ENCODE measurements at regions of chr4 and their contacts with region 1.

Region 1: GRCh38 chr4:77156533-77156911 is 485 bp upstream of the CCNG2 start:
- DNase-seq: peak in 8 of 9 experiments; percentile 91 to 99 (median 97)
- ATAC-seq: peak; percentile 93
- H3K4me3 ChIP-seq: peak overlapping the region; percentile 83 to 93
- H3K4me3 Mint-ChIP-seq: peak overlapping the region; percentile 100
- H3K27ac ChIP-seq: peak overlapping the region; percentile 62 to 79
- H3K27ac Mint-ChIP-seq: peak overlapping the region; percentile 99
- H3K4me1 ChIP-seq: peaks cover 21% of the 10 kb centered on the region
- H3K4me1 Mint-ChIP-seq: peaks cover 39% of the 10 kb centered on the region
- H3K27me3 ChIP-seq: no peaks in the 10 kb centered on the region
- H3K27me3 Mint-ChIP-seq: no peaks in the 10 kb centered on the region
- CTCF ChIP-seq: no peak

Region 2: DNA sequence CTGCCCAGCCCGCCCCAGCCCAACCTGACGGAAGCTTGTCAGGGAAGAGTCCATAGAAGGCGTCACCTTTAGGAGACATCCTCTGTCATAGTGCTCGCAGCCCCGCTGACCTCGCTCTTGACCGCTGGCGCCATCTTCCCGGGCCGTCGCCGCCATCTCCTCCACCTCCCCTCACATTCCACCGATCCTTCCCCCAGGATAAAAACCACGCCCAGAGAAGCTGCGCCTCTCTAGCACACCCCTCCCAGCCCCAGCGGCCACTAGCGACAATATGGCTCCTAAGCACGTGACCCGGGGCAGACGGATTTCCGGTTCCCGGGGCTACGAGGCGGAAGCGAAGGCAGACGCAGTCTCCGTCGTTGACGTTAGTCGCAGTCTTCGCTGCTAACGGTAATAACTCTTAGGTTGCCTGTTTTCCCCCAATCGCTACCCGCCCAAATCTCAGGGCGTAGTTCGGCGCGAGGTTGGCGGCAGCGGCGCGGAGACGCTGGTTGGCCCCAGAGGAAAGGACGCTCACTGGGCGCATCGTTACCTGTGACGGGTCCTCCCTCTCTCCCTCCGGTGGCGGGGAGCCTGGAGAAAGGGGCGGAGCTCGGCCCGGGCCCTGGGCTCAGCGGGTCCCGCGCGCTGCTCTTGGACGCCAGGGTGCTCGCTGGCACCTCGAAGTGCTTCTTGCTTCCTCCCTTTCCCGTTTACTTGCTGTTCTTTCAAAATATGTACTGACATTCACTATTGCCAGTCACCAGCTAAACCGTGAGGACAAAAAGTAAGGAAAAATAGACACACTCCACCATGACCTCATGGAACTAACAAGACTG is 1642.2 kb before region 1 on chr4 and contains the starts of genes RCHY1 and THAP6:
- CTCF ChIA-PET with region 1: no interaction called
- POLR2A ChIA-PET with region 1: no interaction called
- intact Hi-C with region 1: loop called in 1 of 2 experiments (anchors 5 kb)
- DNase-seq: peak; percentile 84 to 97 (median 92)
- ATAC-seq: peak; percentile 87
- H3K4me3 ChIP-seq: peak within 1 kb of the TSS; percentile 92 to 94
- H3K4me3 Mint-ChIP-seq: no peak within 1 kb of the TSS
- H3K27ac ChIP-seq: peak within 1 kb of the TSS; percentile 96 to 98
- H3K27ac Mint-ChIP-seq: peak within 1 kb of the TSS; percentile 99
- H3K4me1 ChIP-seq: peaks cover 55% of the 10 kb centered on the region
- H3K4me1 Mint-ChIP-seq: peaks cover 63% of the 10 kb centered on the region
- H3K27me3 ChIP-seq: no peaks in the 10 kb centered on the region
- H3K27me3 Mint-ChIP-seq: no peaks in the 10 kb centered on the region
- CTCF ChIP-seq: no peak
- total RNA-seq, gene RCHY1: 45.4 to 52.8 TPM
- total RNA-seq, gene THAP6: 15.3 to 16.3 TPM

Region 3: DNA sequence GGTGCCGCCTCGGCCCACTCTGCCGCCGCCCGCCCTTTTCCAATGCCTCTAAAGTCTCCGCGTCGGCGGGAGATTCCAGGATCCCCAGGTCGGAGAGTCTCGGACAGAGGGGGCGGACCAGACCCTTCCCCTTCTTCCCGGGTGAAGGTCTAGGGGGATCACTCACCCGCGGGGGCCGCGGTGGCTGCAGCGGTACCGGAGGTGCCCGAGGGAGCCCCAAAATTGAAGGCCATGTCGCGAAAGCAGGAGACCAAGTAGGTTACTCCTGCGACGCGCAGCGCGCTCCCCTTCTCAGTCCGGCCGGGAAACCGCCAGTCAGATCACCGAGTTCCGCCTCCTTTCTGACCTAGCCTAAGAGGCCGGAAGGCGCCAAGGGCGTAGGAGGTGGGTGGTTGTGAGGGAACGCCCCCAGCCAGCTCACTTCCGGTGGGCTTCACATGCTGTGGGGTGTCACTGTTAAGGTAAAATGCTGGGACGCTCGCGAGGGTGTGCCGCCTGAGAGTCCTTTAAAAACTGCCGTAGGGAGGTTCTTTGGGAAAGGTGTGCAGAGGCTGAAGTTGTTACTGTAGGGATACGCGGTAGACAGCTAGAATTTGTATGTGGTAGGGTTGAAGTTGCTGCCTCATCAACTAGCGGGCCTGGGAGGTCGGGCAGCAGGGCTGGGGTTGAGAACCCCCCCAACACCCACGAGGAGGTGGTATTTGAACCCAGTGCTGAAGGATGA is 1008.2 kb before region 1 on chr4 and contains the start of gene NUP54:
- CTCF ChIA-PET with region 1: no interaction called
- POLR2A ChIA-PET with region 1: no interaction called
- intact Hi-C with region 1: loop called (anchors 2 to 10 kb)
- DNase-seq: peak; percentile 91 to 97 (median 95)
- ATAC-seq: peak; percentile 98
- H3K4me3 ChIP-seq: peak within 1 kb of the TSS; percentile 66 to 99
- H3K4me3 Mint-ChIP-seq: peak within 1 kb of the TSS; percentile 96
- H3K27ac ChIP-seq: peak within 1 kb of the TSS; percentile 90 to 93
- H3K27ac Mint-ChIP-seq: peak within 1 kb of the TSS; percentile 96
- H3K4me1 ChIP-seq: peaks cover 29% of the 10 kb centered on the region
- H3K4me1 Mint-ChIP-seq: peaks cover 45% of the 10 kb centered on the region
- H3K27me3 ChIP-seq: no peaks in the 10 kb centered on the region
- H3K27me3 Mint-ChIP-seq: no peaks in the 10 kb centered on the region
- CTCF ChIP-seq: no peak
- total RNA-seq, gene NUP54: 95.7 to 103 TPM

Region 4: GRCh38 chr4:76993787-76994641 is 162.5 kb before region 1 on chr4:
- CTCF ChIA-PET with region 1: no interaction called
- POLR2A ChIA-PET with region 1: no interaction called
- intact Hi-C with region 1: loop called (anchors 1 to 5 kb)
- DNase-seq: peak; percentile 10 to 81 (median 54)
- ATAC-seq: peak; percentile 65
- H3K4me3 ChIP-seq: peak overlapping the region in 1 of 2 experiments; percentile 55
- H3K4me3 Mint-ChIP-seq: peak overlapping the region; percentile 75
- H3K27ac ChIP-seq: peak overlapping the region; percentile 2 to 39
- H3K27ac Mint-ChIP-seq: peak overlapping the region; percentile 89
- H3K4me1 ChIP-seq: peaks cover 57% of the 10 kb centered on the region
- H3K4me1 Mint-ChIP-seq: peaks cover 61% of the 10 kb centered on the region
- H3K27me3 ChIP-seq: no peaks in the 10 kb centered on the region
- H3K27me3 Mint-ChIP-seq: no peaks in the 10 kb centered on the region
- CTCF ChIP-seq: no peak

Region 5: GRCh38 chr4:77095101-77095821 is 61.3 kb before region 1 on chr4:
- CTCF ChIA-PET with region 1: interaction called, 21 read pairs
- POLR2A ChIA-PET with region 1: interaction called, 3 read pairs
- intact Hi-C with region 1: loop called (anchors 1 kb)
- DNase-seq: peak; percentile 48 to 79 (median 75)
- ATAC-seq: peak; percentile 99
- H3K4me3 ChIP-seq: no peak overlapping the region
- H3K4me3 Mint-ChIP-seq: no peak overlapping the region
- H3K27ac ChIP-seq: no peak overlapping the region
- H3K27ac Mint-ChIP-seq: no peak overlapping the region
- H3K4me1 ChIP-seq: peaks cover 1% of the 10 kb centered on the region
- H3K4me1 Mint-ChIP-seq: peaks cover 14% of the 10 kb centered on the region
- H3K27me3 ChIP-seq: peaks cover 0 to 2% of the 10 kb centered on the region in 2 experiments
- H3K27me3 Mint-ChIP-seq: no peaks in the 10 kb centered on the region
- CTCF ChIP-seq: peak; percentile 83

Region 6: DNA sequence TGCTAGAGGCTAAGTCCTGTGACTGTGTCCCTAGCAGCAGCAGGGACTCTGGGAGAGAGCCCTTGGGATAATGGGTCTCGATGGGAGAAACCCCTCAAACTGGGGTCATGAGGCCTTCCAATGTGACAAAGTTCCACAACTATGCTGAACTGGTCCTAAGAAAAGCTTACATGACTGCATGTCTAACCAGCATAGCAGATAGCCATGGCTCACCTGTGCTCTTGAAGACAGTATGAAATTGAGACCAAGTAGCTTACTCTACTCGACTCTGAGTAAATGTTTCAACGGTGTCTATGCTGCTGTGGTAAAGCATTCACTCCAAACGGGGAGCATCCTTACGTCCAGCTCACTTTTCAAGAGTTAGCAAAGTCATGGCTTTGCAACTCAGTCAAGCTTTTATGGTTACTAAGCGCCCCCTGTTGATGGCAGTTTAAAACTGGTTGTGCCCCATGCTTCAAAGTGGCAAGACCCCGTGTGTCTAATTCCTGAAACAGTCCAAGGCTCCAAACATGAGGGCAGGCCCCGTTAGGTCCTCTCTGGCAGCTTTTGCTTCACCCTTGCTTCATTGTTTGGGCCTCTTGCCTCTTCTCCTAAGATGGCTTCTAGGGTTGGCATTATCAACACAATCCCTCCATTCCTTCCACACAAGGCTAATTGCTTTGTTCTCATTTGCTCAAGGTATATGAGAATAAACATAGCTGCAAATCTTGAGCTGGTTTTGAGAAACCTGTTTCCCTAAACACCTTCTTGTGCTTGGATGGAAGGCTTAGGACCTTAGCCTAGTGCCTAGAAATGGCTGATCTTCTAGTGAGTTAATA is 47.1 kb after region 1 on chr4:
- CTCF ChIA-PET with region 1: interaction called, 14 read pairs
- POLR2A ChIA-PET with region 1: interaction called, 3 read pairs
- intact Hi-C with region 1: loop called in 1 of 2 experiments (anchors 2 kb)
- DNase-seq: peak; percentile 28 to 83 (median 72)
- ATAC-seq: peak; percentile 71
- H3K4me3 ChIP-seq: no peak overlapping the region
- H3K4me3 Mint-ChIP-seq: no peak overlapping the region
- H3K27ac ChIP-seq: no peak overlapping the region
- H3K27ac Mint-ChIP-seq: no peak overlapping the region
- H3K4me1 ChIP-seq: no peaks in the 10 kb centered on the region
- H3K4me1 Mint-ChIP-seq: peaks cover 10% of the 10 kb centered on the region
- H3K27me3 ChIP-seq: no peaks in the 10 kb centered on the region
- H3K27me3 Mint-ChIP-seq: peaks cover 5% of the 10 kb centered on the region
- CTCF ChIP-seq: peak; percentile 75

Region 7: GRCh38 chr4:78775303-78776030 is 1618.9 kb after region 1 on chr4:
- CTCF ChIA-PET with region 1: no interaction called
- POLR2A ChIA-PET with region 1: no interaction called
- intact Hi-C with region 1: loop called (anchors 2 to 10 kb)
- DNase-seq: peak; percentile 75 to 93 (median 86)
- ATAC-seq: peak; percentile 57
- H3K4me3 ChIP-seq: peak overlapping the region; percentile 87
- H3K4me3 Mint-ChIP-seq: peak overlapping the region; percentile 92
- H3K27ac ChIP-seq: peak overlapping the region; percentile 82 to 87
- H3K27ac Mint-ChIP-seq: peak overlapping the region; percentile 94
- H3K4me1 ChIP-seq: peaks cover 17% of the 10 kb centered on the region
- H3K4me1 Mint-ChIP-seq: peaks cover 16% of the 10 kb centered on the region
- H3K27me3 ChIP-seq: no peaks in the 10 kb centered on the region
- H3K27me3 Mint-ChIP-seq: no peaks in the 10 kb centered on the region
- CTCF ChIP-seq: no peak

Measured in CD8-positive, alpha-beta T cell (primary cell).